ENCODE measurements at regions of chr20 and their contacts with region 1.

Region 1: DNA sequence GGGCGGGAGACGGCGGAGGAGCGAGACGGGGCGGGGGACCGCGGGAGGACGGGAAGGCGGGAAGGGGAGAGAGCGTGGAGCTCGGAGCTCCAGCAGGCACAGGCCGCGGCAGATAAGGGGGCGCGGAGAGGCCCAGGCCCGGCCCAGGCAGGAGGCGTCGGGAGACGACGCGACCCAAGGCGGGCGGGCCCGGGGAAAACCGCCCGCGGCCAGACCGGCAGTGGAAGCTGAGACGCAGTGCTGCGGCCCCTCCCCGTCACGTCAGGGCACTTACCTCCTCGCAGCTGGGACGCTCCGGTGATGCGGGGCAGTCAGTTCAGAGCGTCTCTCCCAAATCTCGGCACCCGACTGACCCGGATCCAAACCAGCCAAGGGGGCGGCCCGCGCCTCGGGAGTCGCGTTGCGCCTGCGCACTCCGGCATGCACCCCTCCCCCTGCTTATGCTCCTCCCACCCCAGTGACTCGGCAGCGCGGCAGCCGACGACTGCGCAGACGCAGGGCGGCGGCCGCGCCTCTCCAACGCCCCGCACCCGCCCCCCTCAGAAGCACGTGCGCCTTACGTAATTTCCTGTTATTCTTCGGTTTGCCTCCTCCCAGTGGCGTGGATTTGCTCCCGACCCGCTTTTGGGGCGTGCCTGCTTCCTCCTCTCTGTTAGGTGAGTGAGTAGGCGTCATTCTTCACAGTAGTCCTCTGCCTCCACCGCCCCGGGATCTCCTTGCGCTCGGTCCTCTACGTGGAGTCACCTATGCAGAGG is at the start of gene OSER1:
- DNase-seq: peak; percentile 98 to 99 (median 99)
- ATAC-seq: peak; percentile 91
- H3K4me3 ChIP-seq: peak within 1 kb of the TSS; percentile 96
- H3K4me3 Mint-ChIP-seq: peak within 1 kb of the TSS; percentile 90 to 100 (median 95)
- H3K27ac ChIP-seq: peak within 1 kb of the TSS; percentile 97
- H3K27ac Mint-ChIP-seq: peak within 1 kb of the TSS; percentile 97 to 99 (median 98)
- H3K4me1 ChIP-seq: peaks cover 23 to 29% of the 10 kb centered on the region in 2 donors
- H3K4me1 Mint-ChIP-seq: peaks cover 45 to 78% (median 72%) of the 10 kb centered on the region in 7 donors
- H3K27me3 ChIP-seq: no peaks in the 10 kb centered on the region
- H3K27me3 Mint-ChIP-seq: peaks cover 0 to 4% (median 0%) of the 10 kb centered on the region in 5 donors
- total RNA-seq, gene OSER1: 25.0 to 115 (median 43.0) TPM

Region 2: GRCh38 chr20:43456809-43457639 is 753.6 kb before region 1 on chr20:
- CTCF ChIA-PET with region 1: no interaction called
- POLR2A ChIA-PET with region 1: interaction called, 6 read pairs
- intact Hi-C with region 1: loop called (anchors 1 kb)
- DNase-seq: peak in 7 of 9 donors; percentile 73 to 92 (median 91)
- ATAC-seq: peak; percentile 82
- H3K4me3 ChIP-seq: peak overlapping the region; percentile 86
- H3K4me3 Mint-ChIP-seq: peak overlapping the region; percentile 79 to 100 (median 94)
- H3K27ac ChIP-seq: peak overlapping the region; percentile 100
- H3K27ac Mint-ChIP-seq: peak overlapping the region; percentile 96 to 100 (median 99)
- H3K4me1 ChIP-seq: peaks cover 10 to 29% of the 10 kb centered on the region in 2 donors
- H3K4me1 Mint-ChIP-seq: peaks cover 24 to 42% (median 35%) of the 10 kb centered on the region in 7 donors
- H3K27me3 ChIP-seq: no peaks in the 10 kb centered on the region
- H3K27me3 Mint-ChIP-seq: peaks cover 0 to 14% (median 4%) of the 10 kb centered on the region in 5 donors

Region 3: DNA sequence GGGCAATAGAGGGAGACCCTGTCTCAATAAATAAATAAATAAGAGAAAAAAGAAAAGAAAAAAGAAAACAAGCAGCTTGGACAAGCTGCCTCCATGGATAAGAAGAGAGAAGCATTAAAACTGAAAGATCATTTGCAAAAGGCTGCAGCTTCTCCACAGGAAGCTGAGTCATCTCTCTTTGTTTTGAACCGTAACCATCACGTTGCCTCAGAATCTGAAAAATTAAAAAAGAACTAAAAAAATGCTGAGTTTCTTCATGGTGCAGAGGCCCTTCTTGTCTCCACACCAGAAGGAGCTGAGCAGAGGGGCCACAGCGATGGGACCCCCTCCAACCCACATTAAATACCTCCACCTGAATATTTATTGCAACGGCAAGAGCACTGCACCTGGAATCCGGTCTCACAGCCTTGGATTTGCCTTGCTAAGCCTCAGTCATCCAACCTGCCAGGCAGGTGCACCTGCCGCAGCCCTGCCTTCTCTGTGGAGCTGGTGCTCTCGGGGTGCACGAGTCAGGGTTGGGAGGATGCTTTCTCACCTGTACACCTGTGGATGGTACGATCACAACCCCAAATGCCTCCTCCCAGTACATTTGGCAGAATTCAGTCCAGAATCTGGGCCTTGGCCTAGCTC is 267.8 kb before region 1 on chr20:
- CTCF ChIA-PET with region 1: no interaction called
- POLR2A ChIA-PET with region 1: no interaction called
- intact Hi-C with region 1: loop called in 1 of 2 experiments (anchors 1 kb)
- DNase-seq: peak in 7 of 9 donors; percentile 28 to 56 (median 47)
- ATAC-seq: peak; percentile 72
- H3K4me3 ChIP-seq: no peak overlapping the region
- H3K4me3 Mint-ChIP-seq: peak overlapping the region; percentile 16 to 79 (median 46)
- H3K27ac ChIP-seq: peak overlapping the region; percentile 9
- H3K27ac Mint-ChIP-seq: peak overlapping the region; percentile 42 to 90 (median 72)
- H3K4me1 ChIP-seq: peaks cover 29% of the 10 kb centered on the region in 2 donors
- H3K4me1 Mint-ChIP-seq: peaks cover 61 to 92% (median 68%) of the 10 kb centered on the region in 7 donors
- H3K27me3 ChIP-seq: no peaks in the 10 kb centered on the region
- H3K27me3 Mint-ChIP-seq: peaks cover 0 to 27% (median 0%) of the 10 kb centered on the region in 5 donors

Region 4: DNA sequence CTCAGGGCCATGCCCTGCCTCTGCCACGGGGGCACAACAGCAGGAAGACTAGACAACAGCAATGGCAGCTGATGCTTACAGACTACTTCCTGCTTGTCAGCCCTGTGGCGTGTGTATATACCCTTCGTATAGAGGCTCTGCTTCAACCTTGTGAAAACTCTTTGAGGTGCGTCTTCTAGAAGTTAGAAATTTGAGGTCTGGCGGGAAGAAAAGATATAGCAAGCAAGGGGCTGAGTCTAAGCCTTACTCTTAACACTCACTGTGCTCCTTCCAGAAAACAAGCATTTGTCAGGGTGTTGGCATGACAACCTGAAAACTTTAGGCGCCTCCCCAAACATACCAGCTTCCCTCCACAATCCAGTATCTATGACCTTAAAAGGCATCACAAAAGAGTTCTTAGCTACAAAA is 57.0 kb before region 1 on chr20:
- CTCF ChIA-PET with region 1: no interaction called
- POLR2A ChIA-PET with region 1: no interaction called
- intact Hi-C with region 1: loop called in 1 of 2 experiments (anchors 1 kb)
- DNase-seq: peak in 8 of 9 donors; percentile 15 to 77 (median 66)
- ATAC-seq: peak; percentile 90
- H3K4me3 ChIP-seq: no peak overlapping the region
- H3K4me3 Mint-ChIP-seq: peak overlapping the region; percentile 14 to 75 (median 58)
- H3K27ac ChIP-seq: peak overlapping the region; percentile 71
- H3K27ac Mint-ChIP-seq: peak overlapping the region; percentile 34 to 98 (median 92)
- H3K4me1 ChIP-seq: peaks cover 0 to 10% of the 10 kb centered on the region in 2 donors
- H3K4me1 Mint-ChIP-seq: peaks cover 3 to 27% (median 16%) of the 10 kb centered on the region in 7 donors
- H3K27me3 ChIP-seq: no peaks in the 10 kb centered on the region
- H3K27me3 Mint-ChIP-seq: peaks cover 8 to 17% (median 14%) of the 10 kb centered on the region in 5 donors

Region 5: DNA sequence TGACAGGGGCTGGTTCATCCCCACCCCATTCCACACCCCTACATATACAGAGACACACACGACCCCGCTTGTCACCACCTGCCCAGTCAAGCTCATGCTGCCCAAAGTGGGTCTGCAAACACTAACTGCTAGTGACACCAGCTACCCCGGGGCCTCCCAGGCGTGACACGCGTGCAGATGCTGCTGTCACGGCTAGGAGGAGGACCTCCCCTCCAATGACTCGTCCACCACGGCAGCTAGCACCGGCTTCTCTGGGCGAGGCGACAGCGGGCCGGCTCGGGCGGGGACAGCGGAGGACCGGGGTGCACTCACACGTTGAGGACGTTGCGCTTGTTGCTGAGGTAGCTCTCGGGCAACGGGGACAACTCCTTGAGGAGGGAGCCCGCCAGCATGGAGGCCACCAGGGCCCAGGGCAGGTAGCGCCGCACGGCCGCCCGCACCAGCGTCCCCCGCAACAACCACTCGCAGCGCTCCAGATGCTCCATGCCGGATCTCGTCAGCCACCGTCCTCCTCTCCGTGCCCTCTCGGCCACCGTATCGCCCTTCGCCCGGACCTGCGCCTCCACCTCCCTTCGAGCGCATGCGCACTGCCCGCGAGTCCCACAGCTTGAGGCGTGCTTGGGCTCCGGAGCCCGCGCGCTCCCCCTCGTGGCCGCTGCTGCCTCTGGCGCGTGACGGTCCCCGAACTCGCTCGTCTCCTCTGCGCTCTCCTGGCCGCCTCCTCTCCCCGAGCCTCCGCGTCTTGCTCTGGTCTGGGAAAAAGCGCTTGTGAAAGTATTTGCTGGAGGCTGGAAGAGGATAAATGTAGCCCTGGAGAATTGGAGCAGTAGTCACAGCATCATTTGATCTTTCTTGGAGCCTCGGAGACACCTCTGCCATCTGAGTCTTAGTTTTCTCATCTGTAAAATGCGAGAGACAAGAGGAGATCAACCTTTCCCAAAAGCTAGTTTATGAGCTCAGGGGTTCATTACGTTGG is 100.4 kb after region 1 on chr20 and contains the start of gene FITM2:
- CTCF ChIA-PET with region 1: interaction called, 365 read pairs
- POLR2A ChIA-PET with region 1: interaction called, 165 read pairs
- intact Hi-C with region 1: loop called in 1 of 2 experiments (anchors 1 kb)
- DNase-seq: peak; percentile 96 to 99 (median 98)
- ATAC-seq: peak; percentile 99
- H3K4me3 ChIP-seq: peak within 1 kb of the TSS; percentile 98
- H3K4me3 Mint-ChIP-seq: peak within 1 kb of the TSS; percentile 87 to 97 (median 95)
- H3K27ac ChIP-seq: peak within 1 kb of the TSS; percentile 82
- H3K27ac Mint-ChIP-seq: peak within 1 kb of the TSS; percentile 91 to 98 (median 93)
- H3K4me1 ChIP-seq: peaks cover 12 to 18% of the 10 kb centered on the region in 2 donors
- H3K4me1 Mint-ChIP-seq: peaks cover 15 to 35% (median 28%) of the 10 kb centered on the region in 7 donors
- H3K27me3 ChIP-seq: no peaks in the 10 kb centered on the region
- H3K27me3 Mint-ChIP-seq: peaks cover 0 to 8% (median 0%) of the 10 kb centered on the region in 5 donors
- total RNA-seq, gene FITM2: 3.1 to 7.9 (median 5.0) TPM

Region 6: DNA sequence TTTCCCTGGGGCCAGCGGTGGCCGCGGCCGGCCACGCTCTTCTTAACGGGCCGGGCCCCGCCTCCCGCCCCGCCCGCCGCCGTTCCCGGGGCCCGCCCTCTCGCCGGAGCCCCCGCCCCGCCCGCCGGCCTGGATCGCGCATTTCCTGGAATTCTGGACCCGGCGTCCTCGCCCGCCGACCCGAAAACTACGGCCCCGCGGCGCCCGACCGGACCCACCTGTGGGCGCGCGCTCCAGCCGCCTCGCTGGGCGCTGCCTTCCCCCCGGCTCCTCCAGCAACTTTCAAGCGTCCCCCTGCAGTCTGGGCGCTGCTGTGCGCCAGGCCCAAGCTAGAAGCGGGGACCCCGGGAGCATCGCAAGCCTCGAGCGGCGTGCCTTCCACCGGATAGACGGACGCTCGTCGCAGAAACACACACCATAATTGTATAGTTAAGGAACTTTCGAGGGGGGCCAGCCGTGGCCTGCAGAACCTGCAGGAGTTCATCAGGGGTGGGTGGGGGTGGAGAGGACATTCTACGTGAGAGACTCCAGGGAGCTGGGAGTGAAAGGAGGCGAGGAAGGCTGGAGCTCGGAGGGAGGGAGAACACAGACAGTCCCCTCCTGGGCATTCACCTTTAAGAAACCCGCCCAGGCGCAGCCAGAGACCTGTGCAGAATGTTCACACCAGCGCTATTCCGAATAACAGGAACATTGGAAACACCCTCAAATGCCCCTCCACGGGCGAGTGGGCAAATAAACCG is 441.3 kb after region 1 on chr20 and contains the start of gene ADA:
- CTCF ChIA-PET with region 1: interaction called, 3 read pairs
- POLR2A ChIA-PET with region 1: no interaction called
- intact Hi-C with region 1: loop called (anchors 1 to 2 kb)
- DNase-seq: peak; percentile 26 to 70 (median 48)
- ATAC-seq: peak; percentile 70
- H3K4me3 ChIP-seq: peak within 1 kb of the TSS; percentile 73
- H3K4me3 Mint-ChIP-seq: peak within 1 kb of the TSS; percentile 81 to 96 (median 94)
- H3K27ac ChIP-seq: peak within 1 kb of the TSS; percentile 73
- H3K27ac Mint-ChIP-seq: peak within 1 kb of the TSS; percentile 88 to 98 (median 95)
- H3K4me1 ChIP-seq: peaks cover 38 to 43% of the 10 kb centered on the region in 2 donors
- H3K4me1 Mint-ChIP-seq: peaks cover 40 to 57% (median 55%) of the 10 kb centered on the region in 7 donors
- H3K27me3 ChIP-seq: no peaks in the 10 kb centered on the region
- H3K27me3 Mint-ChIP-seq: no peaks in the 10 kb centered on the region
- total RNA-seq, gene ADA: 26.1 to 103 (median 28.2) TPM

Region 7: DNA sequence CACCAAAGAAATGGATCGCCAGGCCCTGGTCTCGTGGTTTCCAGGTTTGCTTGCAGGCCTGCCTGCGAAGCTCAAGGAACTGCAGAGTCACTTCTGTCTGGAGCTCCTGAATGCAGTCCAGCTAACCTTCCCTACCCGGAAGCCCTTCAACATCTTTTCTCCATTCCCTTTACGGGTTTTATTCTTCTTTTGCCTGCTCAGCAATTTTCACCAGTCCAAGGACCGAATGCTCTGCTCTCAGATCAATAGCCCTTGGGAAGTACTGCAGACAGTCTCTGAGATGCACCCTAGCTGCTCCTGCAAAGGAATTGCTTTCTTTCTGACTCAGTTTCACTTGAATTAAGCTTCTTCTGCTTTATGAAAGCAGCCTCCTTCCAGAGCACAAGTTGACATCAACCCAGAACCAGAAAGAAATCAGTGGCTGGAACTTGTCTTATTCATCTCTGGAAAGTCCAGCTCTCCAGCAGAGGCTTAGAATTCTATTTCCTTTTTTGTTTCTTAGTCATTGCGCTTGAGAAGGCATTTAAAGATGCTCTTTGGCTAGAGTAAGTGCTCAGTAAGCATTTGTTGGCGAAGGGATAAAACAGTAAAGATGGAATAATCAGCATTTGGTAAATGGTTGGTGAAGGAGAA is 656.2 kb after region 1 on chr20:
- CTCF ChIA-PET with region 1: no interaction called
- POLR2A ChIA-PET with region 1: no interaction called
- intact Hi-C with region 1: loop called in 1 of 2 experiments (anchors 1 kb)
- DNase-seq: no peak
- ATAC-seq: no peak
- H3K4me3 ChIP-seq: no peak overlapping the region
- H3K4me3 Mint-ChIP-seq: peak overlapping the region in 9 of 10 donors; percentile 41 to 81 (median 70)
- H3K27ac ChIP-seq: no peak overlapping the region
- H3K27ac Mint-ChIP-seq: peak overlapping the region in 2 of 9 donors; percentile 33 to 43
- H3K4me1 ChIP-seq: no peaks in the 10 kb centered on the region
- H3K4me1 Mint-ChIP-seq: peaks cover 0 to 15% (median 8%) of the 10 kb centered on the region in 7 donors
- H3K27me3 ChIP-seq: no peaks in the 10 kb centered on the region
- H3K27me3 Mint-ChIP-seq: peaks cover 0 to 28% (median 0%) of the 10 kb centered on the region in 5 donors

Measured in naive thymus-derived CD4-positive, alpha-beta T cell (primary cell).